ENCODE measurements at regions of chr9 and their contacts with region 1.

Region 1: GRCh38 chr9:113317777-113318176 is 14.6 kb upstream of the RNF183 start:
- DNase-seq: no peak
- H3K4me3 ChIP-seq: no peak overlapping the region
- H3K27ac ChIP-seq: no peak overlapping the region
- H3K4me1 ChIP-seq: no peaks in the 10 kb centered on the region
- H3K27me3 ChIP-seq: no peaks in the 10 kb centered on the region
- CTCF ChIP-seq: no peak

Region 2: DNA sequence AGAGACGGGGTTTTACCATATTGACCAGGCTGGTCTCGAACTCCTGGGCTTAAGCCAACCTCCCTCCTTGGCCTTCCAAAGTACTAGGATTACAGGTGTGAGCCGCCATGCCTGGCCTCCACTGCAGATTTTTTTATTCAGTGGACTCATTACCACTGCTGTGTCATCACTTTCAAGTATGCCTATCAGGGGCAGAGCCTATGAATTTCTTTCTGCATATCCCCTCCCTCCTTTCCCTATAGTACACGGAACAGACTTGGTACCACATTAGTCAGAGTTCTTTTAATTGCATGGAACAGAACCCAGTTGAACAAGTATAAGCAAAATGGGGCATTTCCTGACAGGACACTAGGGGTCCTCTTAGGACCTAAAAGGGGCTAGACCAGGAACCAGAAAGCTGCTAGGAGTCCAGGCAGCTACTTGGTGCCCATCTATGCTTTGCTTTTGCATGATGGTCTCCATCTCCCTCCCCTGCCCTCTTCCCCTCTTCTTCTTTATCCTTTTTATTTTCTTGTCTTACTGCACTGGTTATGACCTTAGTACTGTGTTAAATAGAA is 37.3 kb after region 1 on chr9:
- CTCF ChIA-PET with region 1: no interaction called
- dilution Hi-C with region 1: loop called (anchors 5 kb)
- in situ Hi-C with region 1: no loop called
- intact Hi-C with region 1: no loop called
- DNase-seq: no peak
- H3K4me3 ChIP-seq: no peak overlapping the region
- H3K27ac ChIP-seq: no peak overlapping the region
- H3K4me1 ChIP-seq: no peaks in the 10 kb centered on the region
- H3K27me3 ChIP-seq: peaks cover 12% of the 10 kb centered on the region
- CTCF ChIP-seq: no peak

Measured in mammary epithelial cell (primary cell).